ENCODE measurements at regions of chr12 and their contacts with region 1.

Region 1: GRCh38 chr12:122051231-122051876 is 27.2 kb upstream of the MLXIP start:
- DNase-seq: peak; percentile 25
- ATAC-seq: peak; percentile 42
- H3K4me3 ChIP-seq: no peak overlapping the region
- H3K27ac ChIP-seq: no peak overlapping the region
- H3K4me1 ChIP-seq: peaks cover 21% of the 10 kb centered on the region
- H3K27me3 ChIP-seq: no peaks in the 10 kb centered on the region; a peak in 1 of 5 replicates
- CTCF ChIP-seq: no peak
- EP300 ChIP-seq: no peak
- POLR2A ChIP-seq: no peak
- RAD21 ChIP-seq: no peak

Region 2: DNA sequence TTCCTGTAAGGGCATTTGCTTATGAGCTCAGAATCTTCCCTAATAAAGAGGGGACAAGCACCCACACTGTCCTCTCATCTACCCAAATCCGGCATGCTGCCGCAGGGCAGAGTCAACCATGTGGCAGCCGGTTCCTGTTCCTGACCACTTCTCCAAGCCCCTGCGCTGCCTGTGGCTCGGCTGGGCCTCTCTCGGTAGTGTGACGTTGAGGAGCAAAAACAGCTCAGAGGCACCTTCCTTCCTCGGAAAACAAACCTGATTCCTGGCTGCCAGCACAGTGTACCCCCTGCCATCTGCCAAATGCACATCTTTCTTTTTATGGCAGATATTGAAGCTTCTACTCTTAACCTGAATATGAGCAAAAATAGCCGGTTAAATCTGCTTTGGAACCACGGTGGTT is 82.5 kb before region 1 on chr12:
- CTCF ChIA-PET with region 1: no interaction called
- POLR2A ChIA-PET with region 1: no interaction called
- in situ Hi-C with region 1: no loop called
- intact Hi-C with region 1: no loop called
- DNase-seq: no peak
- ATAC-seq: no peak
- H3K4me3 ChIP-seq: no peak overlapping the region
- H3K27ac ChIP-seq: no peak overlapping the region
- H3K4me1 ChIP-seq: peaks cover under 1% of the 10 kb centered on the region; the same call in 1 of the 2 replicates
- H3K27me3 ChIP-seq: no peaks in the 10 kb centered on the region; a peak in 1 of 5 replicates
- CTCF ChIP-seq: no peak
- EP300 ChIP-seq: no peak
- POLR2A ChIP-seq: no peak
- RAD21 ChIP-seq: no peak

Region 3: DNA sequence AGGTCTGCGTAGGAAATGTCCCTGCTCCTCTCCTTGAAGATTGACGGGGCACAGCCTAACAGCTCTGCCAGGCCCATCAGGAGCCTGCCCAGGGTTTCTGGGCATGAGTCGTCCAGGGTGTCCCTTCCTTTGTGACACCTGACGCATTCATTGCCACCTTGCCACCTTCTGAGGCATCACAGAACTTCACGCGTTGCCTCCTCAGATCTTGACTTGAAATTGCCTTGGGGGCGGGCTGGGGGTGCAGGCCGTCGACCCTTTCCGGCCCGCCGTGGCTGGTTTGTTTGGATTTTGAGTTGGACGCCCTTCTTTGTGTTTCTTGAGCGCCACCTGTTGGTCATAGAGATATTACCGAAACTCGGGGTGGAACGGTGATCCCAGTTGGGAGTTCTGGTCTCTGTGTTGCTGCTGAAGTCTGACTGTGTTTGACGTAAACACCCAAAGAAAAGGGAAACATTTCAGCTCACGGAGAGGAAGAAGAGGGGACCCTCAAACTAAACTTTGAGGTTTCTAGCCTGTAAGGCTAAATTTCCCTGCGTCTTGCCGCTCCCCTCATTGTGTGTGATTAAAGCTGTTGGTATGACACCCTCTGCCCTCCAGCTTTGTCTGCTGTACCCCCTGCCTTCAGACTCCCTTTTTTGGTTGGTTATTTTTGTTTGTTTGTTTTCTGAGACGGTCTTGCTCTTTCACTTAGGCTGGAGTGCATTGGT is 71.9 kb after region 1 on chr12:
- CTCF ChIA-PET with region 1: interaction called, 48 read pairs
- POLR2A ChIA-PET with region 1: no interaction called
- in situ Hi-C with region 1: loop called (anchors 5 kb)
- intact Hi-C with region 1: loop called (anchors 1 kb)
- DNase-seq: peak; percentile 63
- ATAC-seq: peak; percentile 48
- H3K4me3 ChIP-seq: peak overlapping the region in 1 of 3 experiments; percentile 44; a peak in 1 of 6 replicates
- H3K27ac ChIP-seq: no peak overlapping the region
- H3K4me1 ChIP-seq: peaks cover 38% of the 10 kb centered on the region
- H3K27me3 ChIP-seq: no peaks in the 10 kb centered on the region
- CTCF ChIP-seq: peak; percentile 87
- EP300 ChIP-seq: no peak
- POLR2A ChIP-seq: no peak
- RAD21 ChIP-seq: peak; percentile 79

Region 4: GRCh38 chr12:122182887-122183585 is 131.7 kb after region 1 on chr12 and contains the start of gene LRRC43:
- CTCF ChIA-PET with region 1: no interaction called
- POLR2A ChIA-PET with region 1: no interaction called
- in situ Hi-C with region 1: loop called (anchors 10 kb)
- intact Hi-C with region 1: no loop called
- DNase-seq: no peak
- ATAC-seq: peak; percentile 71
- H3K4me3 ChIP-seq: peak within 1 kb of the TSS; percentile 40 to 55 (median 46); a peak in 5 of 6 replicates
- H3K27ac ChIP-seq: no peak within 1 kb of the TSS
- H3K4me1 ChIP-seq: peaks cover 20% of the 10 kb centered on the region
- H3K27me3 ChIP-seq: peaks cover 0 to 22% of the 10 kb centered on the region in 2 experiments; a peak in 2 of 5 replicates
- CTCF ChIP-seq: no peak
- EP300 ChIP-seq: no peak
- POLR2A ChIP-seq: no peak
- RAD21 ChIP-seq: no peak
- total RNA-seq, gene LRRC43: not detected in 2 replicates

Region 5: GRCh38 chr12:122190842-122191668 is 139.7 kb after region 1 on chr12:
- CTCF ChIA-PET with region 1: interaction called, 12 read pairs
- POLR2A ChIA-PET with region 1: no interaction called
- in situ Hi-C with region 1: loop called (anchors 10 kb)
- intact Hi-C with region 1: loop called (anchors 2 kb)
- DNase-seq: peak; percentile 60
- ATAC-seq: peak; percentile 91
- H3K4me3 ChIP-seq: no peak overlapping the region
- H3K27ac ChIP-seq: no peak overlapping the region
- H3K4me1 ChIP-seq: peaks cover 5% of the 10 kb centered on the region; the same call in 1 of the 2 replicates
- H3K27me3 ChIP-seq: peaks cover 9 to 28% of the 10 kb centered on the region in 2 experiments
- CTCF ChIP-seq: peak; percentile 90
- EP300 ChIP-seq: no peak
- POLR2A ChIP-seq: no peak
- RAD21 ChIP-seq: peak; percentile 83

Measured in HepG2 (cell line).